ENCODE measurements at regions of chr6 and their contacts with region 1.

Region 1: DNA sequence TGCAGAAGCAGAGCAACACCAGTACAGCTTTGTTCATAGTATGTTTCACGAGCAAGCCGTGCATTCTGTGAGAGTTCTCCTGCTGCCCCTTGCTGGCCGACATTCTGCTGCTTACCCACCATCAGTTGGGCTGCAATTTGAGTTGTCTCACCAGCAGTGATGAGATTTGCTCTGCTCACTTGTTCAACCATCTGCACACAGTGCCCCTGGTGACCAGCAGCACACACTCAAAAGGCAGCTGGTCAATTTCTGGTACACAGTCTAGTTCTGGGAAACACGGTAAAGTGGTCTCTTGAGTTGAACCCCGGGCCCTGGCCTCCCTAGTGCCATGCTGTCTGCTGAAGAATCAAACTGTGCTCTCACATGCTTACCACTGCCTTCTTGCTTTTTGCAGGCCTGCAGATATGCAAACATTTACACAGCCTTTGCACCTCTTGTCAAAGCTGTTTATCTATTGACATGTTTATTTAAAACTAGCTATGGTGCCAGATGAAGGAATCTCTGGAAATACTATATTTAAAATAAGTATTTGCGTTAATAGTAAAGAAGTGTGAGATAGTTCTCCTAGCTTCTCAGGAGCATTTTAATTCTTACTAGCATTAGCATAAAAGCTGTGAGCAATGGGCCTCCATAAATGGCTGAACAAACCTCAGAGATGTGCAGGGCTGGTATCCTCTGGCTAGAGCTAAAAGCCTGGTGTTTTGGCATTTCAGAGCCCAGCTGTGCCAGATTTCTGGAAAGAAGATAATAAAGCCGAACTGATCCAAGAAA is 234.3 kb downstream of the ARHGAP18 start:
- DNase-seq: no peak
- H3K4me3 ChIP-seq: no peak overlapping the region
- H3K27ac ChIP-seq: no peak overlapping the region
- H3K4me1 ChIP-seq: no peaks in the 10 kb centered on the region
- H3K27me3 ChIP-seq: no peaks in the 10 kb centered on the region
- CTCF ChIP-seq: no peak

Region 2: DNA sequence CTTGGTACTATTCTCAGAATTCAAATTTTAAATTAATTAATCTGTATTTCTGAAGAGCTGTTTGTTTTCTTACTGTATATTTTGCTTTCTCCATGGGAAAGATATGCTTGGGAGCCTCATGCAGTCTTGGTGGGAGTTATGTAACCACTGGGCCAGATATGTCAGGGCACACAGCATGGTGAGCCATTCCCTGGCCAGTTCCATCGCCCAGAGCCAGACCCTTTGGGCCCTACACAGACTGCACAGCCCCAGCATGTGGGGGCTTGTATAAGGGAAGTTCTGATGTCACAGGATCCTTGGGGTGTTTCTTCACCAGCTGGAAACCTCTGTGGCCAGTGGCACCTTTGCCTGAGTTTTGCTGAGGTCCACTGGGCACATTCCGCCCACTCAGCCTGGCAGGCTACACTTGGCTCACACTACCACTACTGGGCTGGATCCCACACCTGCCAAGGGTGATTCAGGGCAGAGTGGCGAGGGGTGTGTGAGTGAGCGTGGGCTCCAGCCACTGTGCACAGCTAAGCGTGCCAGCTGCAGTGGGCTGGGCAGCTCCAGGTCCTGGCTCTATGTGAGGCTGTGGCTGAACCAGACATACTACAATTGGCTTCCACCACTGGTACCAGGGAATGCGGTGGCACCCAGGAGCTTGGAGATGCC is 59.2 kb before region 1 on chr6:
- CTCF ChIA-PET with region 1: no interaction called
- POLR2A ChIA-PET with region 1: no interaction called
- intact Hi-C with region 1: loop called (anchors 5 kb)
- DNase-seq: no peak
- H3K4me3 ChIP-seq: no peak overlapping the region
- H3K27ac ChIP-seq: no peak overlapping the region
- H3K4me1 ChIP-seq: no peaks in the 10 kb centered on the region
- H3K27me3 ChIP-seq: no peaks in the 10 kb centered on the region
- CTCF ChIP-seq: no peak

Region 3: DNA sequence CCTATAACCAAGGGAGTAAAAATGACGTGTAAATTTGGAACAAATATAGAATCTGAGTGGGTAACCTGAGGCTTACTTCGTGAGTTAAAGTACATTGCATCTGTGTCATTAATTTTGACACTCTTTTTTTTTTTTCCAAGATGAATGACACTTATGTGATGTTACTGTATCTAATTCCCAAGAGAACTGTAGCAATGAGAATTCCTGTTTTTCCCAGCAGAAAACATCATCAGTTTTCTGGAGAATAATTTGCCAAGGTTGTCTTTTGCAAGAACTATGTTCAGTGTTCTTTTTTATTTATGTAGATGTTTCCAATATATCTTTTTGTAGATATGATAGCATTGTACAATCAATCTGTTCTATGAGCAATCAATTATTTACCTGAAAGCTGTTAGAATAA is 49.3 kb before region 1 on chr6:
- CTCF ChIA-PET with region 1: no interaction called
- POLR2A ChIA-PET with region 1: interaction called, 12 read pairs
- intact Hi-C with region 1: no loop called
- DNase-seq: no peak
- H3K4me3 ChIP-seq: no peak overlapping the region
- H3K27ac ChIP-seq: no peak overlapping the region
- H3K4me1 ChIP-seq: no peaks in the 10 kb centered on the region
- H3K27me3 ChIP-seq: no peaks in the 10 kb centered on the region
- CTCF ChIP-seq: no peak

Region 4: GRCh38 chr6:130825772-130826441 is 1350.2 kb after region 1 on chr6:
- CTCF ChIA-PET with region 1: no interaction called
- POLR2A ChIA-PET with region 1: no interaction called
- intact Hi-C with region 1: no loop called
- DNase-seq: no peak
- H3K4me3 ChIP-seq: no peak overlapping the region
- H3K27ac ChIP-seq: no peak overlapping the region
- H3K4me1 ChIP-seq: no peaks in the 10 kb centered on the region
- H3K27me3 ChIP-seq: no peaks in the 10 kb centered on the region
- CTCF ChIP-seq: no peak

Measured in A673 (cell line).